ENCODE measurements at regions of chr9 and their contacts with region 1.

Region 1: GRCh38 chr9:129610473-129611301 is 10.2 kb downstream of the C9orf50 start:
- DNase-seq: peak; percentile 59 to 69 (median 66)
- H3K4me3 ChIP-seq: peak overlapping the region; percentile 43 to 79 (median 45)
- H3K4me3 Mint-ChIP-seq: peak overlapping the region; percentile 75 to 88
- H3K27ac ChIP-seq: peak overlapping the region in 1 of 2 donors; percentile 81
- H3K27ac Mint-ChIP-seq: peak overlapping the region in 5 of 7 donors; percentile 74 to 90 (median 87)
- H3K4me1 ChIP-seq: peaks cover 43 to 49% of the 10 kb centered on the region in 2 donors
- H3K4me1 Mint-ChIP-seq: peaks cover 45% of the 10 kb centered on the region
- H3K27me3 ChIP-seq: no peaks in the 10 kb centered on the region
- H3K27me3 Mint-ChIP-seq: peaks cover 6 to 12% (median 8%) of the 10 kb centered on the region in 3 donors
- CTCF ChIP-seq: peak; percentile 99

Region 2: DNA sequence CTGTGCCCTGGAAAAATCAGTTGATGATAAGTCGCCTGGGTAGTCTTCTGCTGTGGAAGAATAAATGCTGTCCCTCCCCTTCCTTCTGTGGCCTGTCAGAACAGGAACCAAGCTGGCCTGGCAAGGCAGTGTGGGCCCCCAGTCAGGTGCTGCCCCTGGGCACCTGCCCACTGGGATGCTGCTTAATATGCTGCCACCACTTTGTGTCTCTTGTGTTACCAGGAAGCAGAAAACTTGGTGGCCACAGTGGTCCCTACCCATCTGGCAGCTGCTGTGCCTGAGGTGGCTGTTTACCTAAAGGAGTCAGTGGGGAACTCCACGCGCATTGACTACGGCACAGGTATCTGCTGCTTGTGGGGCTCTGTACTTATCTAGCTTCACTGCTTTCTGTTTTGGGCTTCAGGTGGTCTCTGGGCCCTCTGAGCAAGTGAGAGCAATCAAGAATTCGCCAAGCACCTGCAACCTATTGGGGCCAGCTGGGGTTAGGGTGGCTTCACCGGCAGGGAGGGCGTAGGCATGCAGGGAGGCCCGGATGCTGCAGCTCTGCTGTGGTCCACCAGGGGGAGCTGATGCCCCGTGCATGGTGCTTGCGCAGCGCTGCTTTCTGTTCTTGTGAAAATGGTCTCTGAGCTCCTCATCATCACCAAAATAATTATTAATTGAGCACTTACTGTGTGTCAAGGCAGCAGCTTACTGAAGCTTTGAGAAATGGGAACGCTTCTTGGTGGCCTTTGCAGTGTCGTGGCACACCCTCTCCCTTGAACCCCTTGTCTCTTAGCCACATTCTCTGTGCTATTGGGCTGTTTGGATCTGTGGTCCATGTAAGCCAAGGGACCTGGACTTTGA is 479.2 kb before region 1 on chr9:
- intact Hi-C with region 1: loop called (anchors 2 to 5 kb)
- DNase-seq: peak; percentile 66 to 74 (median 70)
- H3K4me3 ChIP-seq: no peak overlapping the region
- H3K4me3 Mint-ChIP-seq: no peak overlapping the region
- H3K27ac ChIP-seq: no peak overlapping the region
- H3K27ac Mint-ChIP-seq: peak overlapping the region in 3 of 7 donors; percentile 40 to 75 (median 72)
- H3K4me1 ChIP-seq: no peaks in the 10 kb centered on the region
- H3K4me1 Mint-ChIP-seq: peaks cover 4% of the 10 kb centered on the region
- H3K27me3 ChIP-seq: no peaks in the 10 kb centered on the region
- H3K27me3 Mint-ChIP-seq: no peaks in the 10 kb centered on the region
- CTCF ChIP-seq: peak; percentile 98

Region 3: DNA sequence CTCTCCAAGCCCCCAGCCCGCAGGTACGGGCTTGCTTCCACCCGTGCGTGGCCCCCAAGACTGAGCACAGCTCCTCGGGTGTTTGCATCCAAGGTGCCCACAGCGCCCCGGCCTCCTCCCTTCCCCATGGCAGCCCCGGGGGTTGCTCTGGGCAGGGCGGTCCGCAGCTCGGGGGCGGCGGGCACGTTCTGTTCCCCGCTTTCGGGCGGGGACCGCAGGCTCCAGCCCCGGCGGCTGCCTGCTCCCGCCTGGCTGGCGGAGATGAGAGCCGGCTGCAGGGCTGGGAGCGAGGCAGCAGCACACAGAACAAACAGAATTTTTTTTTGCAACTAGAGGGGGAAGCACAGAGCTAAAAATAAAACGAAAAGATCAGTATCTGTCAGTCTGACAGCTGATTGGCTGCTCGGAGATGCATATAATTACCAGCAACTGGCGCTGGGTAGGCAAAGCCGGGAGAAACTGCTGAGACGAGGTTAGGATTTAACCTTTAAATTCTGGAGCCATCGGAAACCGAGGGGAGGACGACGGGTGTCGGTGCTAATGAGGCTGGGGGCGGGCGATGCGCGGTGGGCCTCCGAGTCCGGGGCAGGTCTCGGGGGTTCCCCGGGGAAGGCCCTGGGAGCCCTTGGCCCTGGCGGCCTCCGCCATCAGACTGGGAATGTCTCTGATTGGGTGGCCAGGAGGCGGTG is 290.0 kb before region 1 on chr9:
- intact Hi-C with region 1: loop called (anchors 5 to 10 kb)
- DNase-seq: peak; percentile 77 to 90 (median 79)
- H3K4me3 ChIP-seq: peak overlapping the region; percentile 54 to 82 (median 55)
- H3K4me3 Mint-ChIP-seq: peak overlapping the region; percentile 86 to 96
- H3K27ac ChIP-seq: peak overlapping the region; percentile 49 to 94
- H3K27ac Mint-ChIP-seq: peak overlapping the region; percentile 90 to 99 (median 95)
- H3K4me1 ChIP-seq: peaks cover 34 to 52% of the 10 kb centered on the region in 2 donors
- H3K4me1 Mint-ChIP-seq: peaks cover 56% of the 10 kb centered on the region
- H3K27me3 ChIP-seq: no peaks in the 10 kb centered on the region
- H3K27me3 Mint-ChIP-seq: peaks cover 0 to 3% (median 1%) of the 10 kb centered on the region in 3 donors
- CTCF ChIP-seq: peak; percentile 43

Region 4: DNA sequence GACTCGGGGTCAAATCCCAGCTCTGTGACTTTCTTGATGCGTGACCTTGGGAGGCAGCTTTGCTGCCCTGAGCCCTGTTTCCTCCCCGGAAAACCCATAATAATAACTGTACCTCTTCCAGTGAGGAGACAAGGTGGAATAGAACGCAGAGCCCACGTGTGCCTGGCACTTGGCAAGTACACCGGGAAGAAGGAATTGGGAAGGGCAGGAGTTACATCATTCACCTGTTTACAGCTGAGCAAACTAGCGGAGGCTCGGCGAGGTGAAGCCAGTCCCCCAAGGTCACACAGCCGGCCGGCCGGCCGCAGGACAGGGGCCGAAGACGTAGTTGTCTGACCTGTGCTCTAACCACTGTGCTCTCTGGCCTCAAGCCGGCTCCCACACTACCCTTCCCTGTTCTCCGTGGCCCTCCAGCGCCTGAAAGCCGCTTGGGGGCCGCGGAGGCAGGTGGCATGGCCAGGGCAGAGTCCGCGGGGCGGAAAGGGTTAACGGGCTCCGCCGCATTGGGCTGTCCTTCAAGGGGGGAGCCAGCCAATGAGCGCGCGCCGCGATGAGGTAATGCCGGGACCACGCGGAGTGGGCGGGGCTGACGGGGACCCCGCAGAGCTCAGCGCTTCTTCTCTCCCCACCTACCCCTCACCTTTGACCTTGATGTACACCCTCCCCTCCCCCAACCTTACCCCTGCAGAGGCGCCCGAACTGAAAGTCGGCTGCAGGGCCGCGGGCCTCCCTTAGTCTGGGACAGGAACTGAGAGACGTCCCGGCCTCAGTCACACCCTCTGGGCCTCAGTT is 115.0 kb before region 1 on chr9:
- intact Hi-C with region 1: loop called in 1 of 2 experiments (anchors 10 kb)
- DNase-seq: peak; percentile 66 to 83 (median 76)
- H3K4me3 ChIP-seq: peak overlapping the region; percentile 66 to 96 (median 86)
- H3K4me3 Mint-ChIP-seq: peak overlapping the region; percentile 90 to 91
- H3K27ac ChIP-seq: peak overlapping the region; percentile 69 to 91
- H3K27ac Mint-ChIP-seq: peak overlapping the region; percentile 85 to 98 (median 93)
- H3K4me1 ChIP-seq: peaks cover 43 to 50% of the 10 kb centered on the region in 2 donors
- H3K4me1 Mint-ChIP-seq: peaks cover 51% of the 10 kb centered on the region
- H3K27me3 ChIP-seq: no peaks in the 10 kb centered on the region
- H3K27me3 Mint-ChIP-seq: peaks cover 2 to 13% (median 4%) of the 10 kb centered on the region in 3 donors
- CTCF ChIP-seq: no peak

Region 5: GRCh38 chr9:129626079-129626624 is 15.5 kb after region 1 on chr9 and contains the start of gene NTMT1:
- intact Hi-C with region 1: loop called in 1 of 2 experiments (anchors 2 kb)
- DNase-seq: peak; percentile 90 to 92 (median 90)
- H3K4me3 ChIP-seq: peak within 1 kb of the TSS; percentile 51 to 83 (median 75)
- H3K4me3 Mint-ChIP-seq: peak within 1 kb of the TSS; percentile 80 to 94
- H3K27ac ChIP-seq: peak within 1 kb of the TSS; percentile 86 to 97
- H3K27ac Mint-ChIP-seq: peak within 1 kb of the TSS; percentile 89 to 96 (median 93)
- H3K4me1 ChIP-seq: peaks cover 47 to 56% of the 10 kb centered on the region in 2 donors
- H3K4me1 Mint-ChIP-seq: peaks cover 64% of the 10 kb centered on the region
- H3K27me3 ChIP-seq: peaks cover 0 to 5% of the 10 kb centered on the region in 2 donors
- H3K27me3 Mint-ChIP-seq: peaks cover 5 to 9% (median 6%) of the 10 kb centered on the region in 3 donors
- CTCF ChIP-seq: no peak
- polyA plus RNA-seq, gene NTMT1: 16.0 to 43.9 (median 28.2) TPM